Dorsolateral prefrontal cortex (tissue), 120 donors: ENCODE measurements at regions of chr5 and their contacts with region 1.

Region 1: GRCh38 chr5:104763216-104763615 is 1200.6 kb upstream of the NUDT12 start:
- DNase-seq: no peak
- H3K4me3 ChIP-seq: no peak overlapping the region
- H3K27ac ChIP-seq: no peak overlapping the region
- H3K27me3 ChIP-seq: no peaks in the 10 kb centered on the region
- CTCF ChIP-seq: no peak

Region 2: DNA sequence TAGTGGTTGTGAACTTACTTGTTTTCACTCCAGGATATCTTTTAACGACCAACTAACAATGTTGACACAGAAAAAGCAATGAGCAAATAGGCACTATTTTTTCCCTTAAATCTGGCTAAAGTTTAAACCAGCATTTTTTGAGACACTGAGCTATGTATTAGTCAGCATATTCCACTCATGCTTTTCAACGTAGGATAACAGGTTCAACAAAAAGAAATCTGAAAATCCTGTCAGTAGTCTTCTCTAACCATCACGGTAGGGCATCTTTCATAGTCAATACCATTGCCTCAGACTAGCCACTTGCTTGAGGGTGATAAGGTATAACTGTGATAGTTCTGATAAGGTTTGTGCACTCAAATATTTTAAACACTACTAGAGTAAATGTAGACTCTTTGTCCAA is 23.3 kb before region 1 on chr5:
- intact Hi-C with region 1: loop called in 1 of 2 experiments (anchors 2 kb)
- DNase-seq: no peak
- H3K4me3 ChIP-seq: no peak overlapping the region
- H3K27ac ChIP-seq: no peak overlapping the region
- H3K27me3 ChIP-seq: no peaks in the 10 kb centered on the region
- CTCF ChIP-seq: no peak

Region 3: DNA sequence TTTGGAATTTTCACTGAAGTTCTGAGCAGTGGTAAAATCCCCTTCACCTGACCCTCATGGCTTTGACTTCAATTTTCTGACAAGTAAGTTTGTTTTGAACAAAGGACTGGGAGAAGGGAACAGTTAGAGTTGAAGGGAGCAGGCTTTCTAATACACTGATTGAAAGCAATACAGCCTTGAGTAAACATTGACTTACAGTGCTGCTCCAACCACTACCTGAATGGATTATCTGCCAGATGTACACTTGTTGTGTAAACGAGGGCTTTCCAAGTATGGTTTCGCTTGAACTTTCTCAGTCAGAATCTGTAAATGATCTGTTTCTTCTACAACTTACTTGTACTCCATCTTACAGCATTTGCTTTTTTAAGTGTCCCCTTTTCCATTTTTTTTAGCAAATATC is 214.3 kb after region 1 on chr5:
- intact Hi-C with region 1: no loop called
- DNase-seq: no peak
- H3K4me3 ChIP-seq: no peak overlapping the region
- H3K27ac ChIP-seq: no peak overlapping the region
- H3K27me3 ChIP-seq: no peaks in the 10 kb centered on the region
- CTCF ChIP-seq: no peak